ENCODE measurements at regions of chr2 and their contacts with region 1.

Region 1: GRCh38 chr2:151261231-151261976 is at the start of gene RBM43:
- DNase-seq: peak; percentile 61 to 89 (median 81)
- ATAC-seq: peak; percentile 88
- H3K4me3 Mint-ChIP-seq: peak within 1 kb of the TSS; percentile 87 to 99 (median 94)
- H3K27ac Mint-ChIP-seq: peak within 1 kb of the TSS; percentile 90 to 99 (median 98)
- H3K4me1 Mint-ChIP-seq: peaks cover 17 to 43% (median 39%) of the 10 kb centered on the region in 4 donors
- H3K27me3 Mint-ChIP-seq: no peaks in the 10 kb centered on the region
- polyA plus RNA-seq, gene RBM43: 4.1 to 4.4 (median 4.2) TPM

Region 2: GRCh38 chr2:149587220-149587949 is 1674.0 kb before region 1 on chr2 and contains the start of gene MMADHC:
- POLR2A ChIA-PET with region 1: interaction called, 16 read pairs
- DNase-seq: peak; percentile 84 to 96 (median 92)
- ATAC-seq: peak; percentile 95 to 96
- H3K4me3 Mint-ChIP-seq: peak within 1 kb of the TSS; percentile 92 to 98 (median 97)
- H3K27ac Mint-ChIP-seq: peak within 1 kb of the TSS; percentile 96 to 100 (median 100)
- H3K4me1 Mint-ChIP-seq: peaks cover 19 to 55% (median 36%) of the 10 kb centered on the region in 4 donors
- H3K27me3 Mint-ChIP-seq: peaks cover 9 to 32% (median 15%) of the 10 kb centered on the region in 5 donors
- polyA plus RNA-seq, gene MMADHC: 90.2 to 119 (median 103) TPM

Region 3: DNA sequence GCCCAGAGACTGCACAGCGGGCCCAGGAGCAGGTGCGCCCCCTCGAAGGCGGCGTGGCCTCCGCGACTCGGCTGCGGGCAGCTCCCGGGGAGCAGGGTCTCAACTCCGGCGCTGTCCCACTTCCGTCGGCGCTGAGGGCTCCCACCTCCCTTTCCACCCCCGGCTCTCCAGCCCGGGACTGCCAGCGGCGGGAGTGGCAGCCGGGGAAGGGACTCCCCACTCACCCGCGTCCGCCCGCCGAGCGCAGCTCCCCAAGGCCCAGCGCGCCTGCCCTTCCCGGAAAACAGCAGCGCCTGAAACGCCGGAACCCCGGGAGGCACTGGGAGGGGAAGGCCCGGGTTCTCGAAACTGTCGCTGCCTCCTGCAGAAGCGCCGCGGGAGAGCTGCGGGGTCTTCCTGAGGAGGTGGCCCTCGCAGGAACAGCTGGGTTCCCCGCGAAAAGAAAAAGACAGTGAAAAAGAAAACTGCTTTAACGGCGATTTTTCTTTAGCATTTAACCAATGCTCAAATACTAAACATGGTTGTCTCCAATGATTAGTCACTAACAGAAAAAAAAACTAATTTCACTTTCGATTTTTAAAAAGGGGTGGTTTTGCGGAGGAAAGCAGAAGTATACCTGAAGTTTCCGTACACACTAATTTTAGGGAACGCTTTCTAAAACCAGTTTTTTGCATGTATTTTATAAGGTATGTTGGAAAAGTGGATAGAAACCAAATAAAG is 28.1 kb after region 1 on chr2 and contains the start of gene NMI:
- POLR2A ChIA-PET with region 1: interaction called, 66 read pairs
- DNase-seq: peak; percentile 31 to 83 (median 60)
- ATAC-seq: peak; percentile 75 to 78
- H3K4me3 Mint-ChIP-seq: peak within 1 kb of the TSS; percentile 84 to 98 (median 94)
- H3K27ac Mint-ChIP-seq: peak within 1 kb of the TSS; percentile 95 to 100 (median 98)
- H3K4me1 Mint-ChIP-seq: peaks cover 20 to 49% (median 45%) of the 10 kb centered on the region in 4 donors
- H3K27me3 Mint-ChIP-seq: no peaks in the 10 kb centered on the region
- polyA plus RNA-seq, gene NMI: 30.0 to 55.1 (median 47.2) TPM

Region 4: DNA sequence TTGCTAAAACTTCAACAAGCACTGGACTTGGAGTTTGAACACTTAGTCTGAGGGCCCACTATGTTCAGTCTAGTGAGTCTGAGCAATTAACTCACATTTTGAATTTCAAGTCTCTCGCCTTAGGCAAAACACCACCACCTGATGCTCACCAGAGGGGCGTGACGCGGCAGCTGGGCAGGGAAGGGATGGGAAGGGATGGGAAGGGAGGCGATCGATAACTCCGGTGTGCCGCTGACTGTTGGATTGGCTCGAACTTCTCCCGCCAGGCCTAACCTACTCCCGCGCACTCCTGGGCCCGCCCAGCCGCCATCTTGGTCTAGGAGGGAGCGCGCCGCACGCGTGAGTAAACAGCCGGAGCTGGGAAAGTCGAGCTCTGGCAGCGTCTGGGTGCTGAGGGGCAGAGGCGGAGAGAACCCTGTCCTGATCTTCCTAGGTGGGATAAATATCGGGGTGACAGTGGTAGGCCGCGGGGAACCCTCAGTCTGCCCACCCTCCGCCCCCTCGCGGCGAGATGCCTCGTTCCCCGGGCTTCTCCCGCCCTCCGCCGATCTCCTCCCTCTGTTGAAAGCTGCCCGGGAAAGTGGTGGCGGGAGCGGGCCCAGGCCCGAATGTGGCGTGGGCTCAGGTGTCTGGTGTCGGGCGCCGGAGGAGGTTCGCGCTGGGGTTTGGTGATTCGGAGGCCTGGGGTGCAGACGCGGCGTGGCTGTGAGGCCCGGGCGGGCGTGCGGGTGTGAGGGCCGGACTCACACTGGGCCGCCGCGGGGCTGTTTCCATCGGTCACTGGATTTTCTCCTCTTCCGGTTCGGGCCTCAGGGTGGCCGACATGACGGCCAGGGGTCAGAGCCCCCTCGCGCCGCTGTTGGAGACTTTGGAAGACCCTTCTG is 148.4 kb after region 1 on chr2 and contains the start of gene RIF1:
- POLR2A ChIA-PET with region 1: interaction called, 12 read pairs
- DNase-seq: peak; percentile 50 to 81 (median 67)
- ATAC-seq: peak; percentile 89 to 90
- H3K4me3 Mint-ChIP-seq: peak within 1 kb of the TSS; percentile 95 to 99 (median 97)
- H3K27ac Mint-ChIP-seq: peak within 1 kb of the TSS; percentile 90 to 98 (median 95)
- H3K4me1 Mint-ChIP-seq: peaks cover 8 to 40% (median 30%) of the 10 kb centered on the region in 4 donors
- H3K27me3 Mint-ChIP-seq: peaks cover 0 to 2% (median 0%) of the 10 kb centered on the region in 5 donors
- polyA plus RNA-seq, gene RIF1: 24.0 to 31.5 (median 27.4) TPM

Measured in naive thymus-derived CD8-positive, alpha-beta T cell (primary cell).